Activated CD4-positive, alpha-beta T cell treated with anti-CD3 and anti-CD28 coated beads for 36 hours (primary cell): ENCODE measurements at regions of chr16 and their contacts with region 1.

Region 1: GRCh38 chr16:19294156-19294649 is 8.7 kb downstream of the CLEC19A start:
- DNase-seq: peak; percentile 73
- ATAC-seq: peak; percentile 92
- H3K4me3 Mint-ChIP-seq: peak overlapping the region; percentile 6
- H3K27ac Mint-ChIP-seq: peak overlapping the region; percentile 68
- H3K4me1 Mint-ChIP-seq: peaks cover 34% of the 10 kb centered on the region
- H3K27me3 Mint-ChIP-seq: peaks cover 17% of the 10 kb centered on the region

Region 2: DNA sequence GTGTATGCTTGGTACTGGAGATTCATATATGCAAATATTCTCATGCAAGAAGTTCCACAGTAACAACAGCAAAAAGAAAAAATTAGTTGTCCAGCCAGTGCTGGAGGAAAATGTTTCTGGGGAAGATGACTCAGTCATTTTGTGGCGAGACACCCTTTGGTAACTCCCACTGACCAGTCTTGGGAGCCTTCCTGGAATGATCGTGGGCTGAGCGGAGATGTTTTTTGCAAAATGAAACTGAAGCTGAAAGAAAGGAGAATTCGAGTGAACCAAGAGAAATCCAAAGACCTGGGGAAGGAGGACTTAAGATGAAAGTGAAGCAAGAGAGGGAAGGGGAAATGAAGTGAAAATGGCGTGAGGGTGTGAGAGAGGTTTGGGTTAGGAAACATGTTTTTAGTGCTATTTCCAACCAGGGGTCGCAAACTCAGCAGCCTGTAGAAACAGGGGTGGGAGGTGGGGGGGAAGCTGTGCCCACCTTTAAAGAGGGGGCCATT is 175.2 kb before region 1 on chr16:
- CTCF ChIA-PET with region 1: no interaction called
- POLR2A ChIA-PET with region 1: no interaction called
- intact Hi-C with region 1: loop called (anchors 1 to 2 kb)
- DNase-seq: peak; percentile 59
- ATAC-seq: peak; percentile 68
- H3K4me3 Mint-ChIP-seq: peak overlapping the region; percentile 62
- H3K27ac Mint-ChIP-seq: peak overlapping the region; percentile 91
- H3K4me1 Mint-ChIP-seq: peaks cover 22% of the 10 kb centered on the region
- H3K27me3 Mint-ChIP-seq: peaks cover 8% of the 10 kb centered on the region

Region 3: DNA sequence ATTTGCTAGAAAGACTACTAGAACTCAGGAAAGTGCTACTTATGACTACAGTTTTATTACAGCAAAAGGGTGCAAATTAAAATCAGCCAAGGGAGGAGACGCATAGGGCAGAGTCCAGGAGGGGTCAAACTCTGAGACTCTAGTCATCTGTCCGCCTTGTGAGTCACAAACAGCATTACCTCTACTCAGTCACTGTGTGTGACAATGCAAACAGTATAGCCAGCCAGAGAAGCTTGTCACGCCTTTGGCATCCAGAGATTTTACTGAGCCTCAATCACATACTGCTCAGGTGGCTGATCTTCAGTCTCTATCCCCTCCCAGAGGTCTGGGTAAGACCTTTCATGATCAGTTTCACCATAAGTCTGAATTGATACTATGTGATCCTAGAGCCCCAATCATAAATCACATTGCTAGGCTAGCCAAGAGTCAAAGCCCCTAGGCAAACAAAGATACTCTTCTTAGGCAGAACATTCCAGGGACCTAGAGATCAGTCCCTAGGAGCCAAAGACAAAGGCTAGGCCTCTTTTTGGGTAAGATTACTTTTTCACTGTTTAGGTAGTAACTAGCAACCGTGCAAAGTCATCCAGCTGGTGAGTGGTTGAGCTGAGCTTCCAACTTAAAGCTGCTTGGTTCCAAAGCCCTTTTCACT is 57.5 kb before region 1 on chr16:
- CTCF ChIA-PET with region 1: no interaction called
- POLR2A ChIA-PET with region 1: no interaction called
- intact Hi-C with region 1: no loop called
- DNase-seq: no peak
- ATAC-seq: no peak
- H3K4me3 Mint-ChIP-seq: no peak overlapping the region
- H3K27ac Mint-ChIP-seq: no peak overlapping the region
- H3K4me1 Mint-ChIP-seq: no peaks in the 10 kb centered on the region
- H3K27me3 Mint-ChIP-seq: no peaks in the 10 kb centered on the region

Region 4: GRCh38 chr16:19366391-19366790 is 72.2 kb after region 1 on chr16:
- CTCF ChIA-PET with region 1: no interaction called
- POLR2A ChIA-PET with region 1: no interaction called
- intact Hi-C with region 1: no loop called
- DNase-seq: no peak
- ATAC-seq: no peak
- H3K4me3 Mint-ChIP-seq: no peak overlapping the region
- H3K27ac Mint-ChIP-seq: no peak overlapping the region
- H3K4me1 Mint-ChIP-seq: no peaks in the 10 kb centered on the region
- H3K27me3 Mint-ChIP-seq: peaks cover 3% of the 10 kb centered on the region

Region 5: GRCh38 chr16:19502395-19503131 is 208.4 kb after region 1 on chr16:
- CTCF ChIA-PET with region 1: no interaction called
- POLR2A ChIA-PET with region 1: no interaction called
- intact Hi-C with region 1: no loop called
- DNase-seq: peak; percentile 83
- ATAC-seq: peak; percentile 53
- H3K4me3 Mint-ChIP-seq: no peak overlapping the region
- H3K27ac Mint-ChIP-seq: no peak overlapping the region
- H3K4me1 Mint-ChIP-seq: no peaks in the 10 kb centered on the region
- H3K27me3 Mint-ChIP-seq: no peaks in the 10 kb centered on the region